ENCODE measurements at regions of chr12 and their contacts with region 1.

Region 1: DNA sequence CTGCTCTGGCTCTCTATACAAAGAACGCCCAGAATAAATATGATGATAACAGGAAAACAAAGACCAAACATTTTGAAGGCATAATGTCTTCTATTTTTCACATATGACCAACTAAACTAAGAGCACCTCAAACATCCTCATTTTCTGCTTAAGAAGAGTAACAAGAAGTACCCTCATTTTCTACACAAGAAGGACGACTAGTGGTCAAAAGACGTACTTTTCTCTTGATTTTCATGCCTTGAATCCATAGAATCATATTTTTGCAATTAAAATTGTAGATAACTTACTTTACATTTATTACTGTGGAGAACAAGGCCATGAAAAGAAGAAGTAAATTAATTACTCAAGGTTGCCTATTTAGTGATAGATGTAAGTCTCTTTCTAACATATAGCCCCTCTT is 358.6 kb downstream of the DUSP6 start:
- DNase-seq: peak in 1 of 2 experiments; percentile 41
- H3K4me3 ChIP-seq: no peak overlapping the region
- H3K27ac ChIP-seq: no peak overlapping the region
- H3K4me1 ChIP-seq: no peaks in the 10 kb centered on the region
- H3K27me3 ChIP-seq: no peaks in the 10 kb centered on the region
- CTCF ChIP-seq: peak; percentile 76

Region 2: GRCh38 chr12:87848248-87848868 is 1145.3 kb before region 1 on chr12:
- CTCF ChIA-PET with region 1: no interaction called
- POLR2A ChIA-PET with region 1: interaction called, 13 read pairs
- intact Hi-C with region 1: no loop called
- DNase-seq: peak in 1 of 2 experiments; percentile 2
- H3K4me3 ChIP-seq: no peak overlapping the region
- H3K27ac ChIP-seq: no peak overlapping the region
- H3K4me1 ChIP-seq: no peaks in the 10 kb centered on the region
- H3K27me3 ChIP-seq: no peaks in the 10 kb centered on the region
- CTCF ChIP-seq: peak; percentile 93

Region 3: GRCh38 chr12:88334271-88334670 is 659.4 kb before region 1 on chr12:
- CTCF ChIA-PET with region 1: no interaction called
- POLR2A ChIA-PET with region 1: no interaction called
- intact Hi-C with region 1: loop called (anchors 10 kb)
- DNase-seq: peak; percentile 36 to 56
- H3K4me3 ChIP-seq: no peak overlapping the region
- H3K27ac ChIP-seq: no peak overlapping the region
- H3K4me1 ChIP-seq: peaks cover 11% of the 10 kb centered on the region; the same call in 1 of the 2 replicates
- H3K27me3 ChIP-seq: no peaks in the 10 kb centered on the region
- CTCF ChIP-seq: no peak

Region 4: DNA sequence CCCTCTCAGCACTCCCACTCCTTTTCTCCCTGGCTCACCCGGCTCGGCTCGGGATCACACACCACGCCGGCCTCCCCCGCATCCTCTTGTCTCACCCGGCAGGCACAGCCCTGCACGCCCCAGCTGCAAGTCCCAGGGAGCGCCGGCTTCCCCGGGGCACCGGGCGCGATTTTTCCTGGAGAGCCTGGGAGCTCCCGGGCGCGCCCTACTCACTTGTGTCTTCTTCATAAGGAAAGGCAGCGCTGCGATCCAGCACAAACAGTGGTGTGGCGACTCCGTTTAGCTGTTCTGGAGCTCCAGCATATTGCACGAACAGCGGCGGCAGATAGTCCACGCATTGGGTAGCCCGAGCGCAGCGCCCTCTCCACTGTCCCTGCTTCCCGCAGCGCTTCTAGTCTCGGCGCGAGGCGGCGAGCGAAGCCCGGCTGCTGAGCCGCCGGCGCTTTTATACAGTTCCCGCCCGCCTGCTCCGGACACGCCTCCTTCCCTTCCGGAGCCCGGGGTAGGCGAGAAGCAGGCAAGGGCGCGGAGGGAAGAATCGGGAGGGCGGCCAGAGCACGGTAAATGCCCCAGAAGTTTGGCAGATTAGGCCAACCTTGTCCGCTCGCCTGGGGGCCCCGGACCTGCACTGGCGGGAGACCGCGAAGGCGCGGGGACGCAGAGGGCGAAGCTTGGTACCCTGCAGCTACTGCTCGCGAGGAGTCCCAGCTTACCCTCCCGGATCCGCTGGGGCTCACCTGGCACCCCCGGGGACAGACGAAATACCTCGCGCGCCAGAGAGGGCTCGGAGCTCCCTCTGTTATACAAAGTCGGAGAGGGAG is 413.4 kb before region 1 on chr12 and contains the start of gene KITLG:
- CTCF ChIA-PET with region 1: interaction called, 4 read pairs
- POLR2A ChIA-PET with region 1: interaction called, 3 read pairs
- intact Hi-C with region 1: loop called (anchors 2 kb)
- DNase-seq: peak; percentile 52 to 89
- H3K4me3 ChIP-seq: peak within 1 kb of the TSS; percentile 67
- H3K27ac ChIP-seq: no peak within 1 kb of the TSS
- H3K4me1 ChIP-seq: peaks cover 13% of the 10 kb centered on the region
- H3K27me3 ChIP-seq: no peaks in the 10 kb centered on the region
- CTCF ChIP-seq: no peak
- total RNA-seq, gene KITLG: 15.8 and 17.4 TPM in 2 replicates

Region 5: GRCh38 chr12:88763601-88764000 is 230.1 kb before region 1 on chr12:
- CTCF ChIA-PET with region 1: no interaction called
- POLR2A ChIA-PET with region 1: no interaction called
- intact Hi-C with region 1: loop called (anchors 10 kb)
- DNase-seq: peak; percentile 19 to 64
- H3K4me3 ChIP-seq: no peak overlapping the region
- H3K27ac ChIP-seq: no peak overlapping the region
- H3K4me1 ChIP-seq: no peaks in the 10 kb centered on the region; the same call in 1 of the 2 replicates
- H3K27me3 ChIP-seq: no peaks in the 10 kb centered on the region
- CTCF ChIP-seq: no peak